MCF 10A (cell line): ENCODE measurements at regions of chr4 and their contacts with region 1.

Region 1: DNA sequence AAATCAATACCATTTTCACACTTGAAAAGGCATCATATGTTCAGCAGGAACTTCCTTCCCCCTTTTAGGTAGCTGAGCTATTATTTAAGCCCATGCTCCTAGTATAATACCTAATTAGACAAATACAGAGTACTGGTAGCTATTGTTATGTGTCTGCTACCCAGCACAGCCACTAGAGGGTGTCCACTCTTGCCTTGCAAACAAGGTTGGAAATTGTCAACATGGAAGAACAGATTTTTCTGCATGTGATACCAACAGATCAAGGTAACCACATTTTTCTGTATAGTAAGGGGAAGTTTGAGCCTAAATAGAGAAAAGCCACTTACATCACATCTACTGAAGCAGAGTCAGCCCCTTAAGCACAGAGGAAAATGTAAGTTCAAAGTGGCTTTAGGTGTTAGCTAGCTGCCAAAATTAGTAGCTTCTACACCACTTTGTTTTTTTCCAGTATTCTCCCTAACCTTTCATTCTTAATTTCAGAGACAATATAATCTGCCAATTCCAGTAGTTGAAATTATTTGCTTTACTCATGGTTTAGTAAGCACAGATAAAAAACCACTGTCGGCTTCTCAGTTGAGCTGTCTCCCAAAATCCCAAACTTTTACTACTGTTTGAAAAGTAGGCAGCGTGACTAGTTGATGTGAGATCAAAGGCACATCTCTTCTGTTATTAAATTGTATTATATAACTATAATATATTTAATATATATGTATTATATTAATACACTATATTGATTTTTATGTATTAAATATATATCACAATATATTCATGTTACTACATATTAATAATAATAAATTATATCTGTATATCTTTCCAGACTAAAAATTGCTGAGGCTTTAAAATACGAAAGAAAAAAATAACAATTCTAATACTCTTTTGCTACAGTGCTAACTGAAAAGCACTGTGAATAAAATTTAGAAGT is 38.2 kb downstream of the EDNRA start:
- DNase-seq: peak; percentile 77
- H3K4me3 Mint-ChIP-seq: no peak overlapping the region
- H3K27ac Mint-ChIP-seq: no peak overlapping the region
- H3K4me1 Mint-ChIP-seq: peaks cover 21% of the 10 kb centered on the region
- H3K27me3 Mint-ChIP-seq: no peaks in the 10 kb centered on the region
- CTCF ChIP-seq: peak; percentile 77

Region 2: DNA sequence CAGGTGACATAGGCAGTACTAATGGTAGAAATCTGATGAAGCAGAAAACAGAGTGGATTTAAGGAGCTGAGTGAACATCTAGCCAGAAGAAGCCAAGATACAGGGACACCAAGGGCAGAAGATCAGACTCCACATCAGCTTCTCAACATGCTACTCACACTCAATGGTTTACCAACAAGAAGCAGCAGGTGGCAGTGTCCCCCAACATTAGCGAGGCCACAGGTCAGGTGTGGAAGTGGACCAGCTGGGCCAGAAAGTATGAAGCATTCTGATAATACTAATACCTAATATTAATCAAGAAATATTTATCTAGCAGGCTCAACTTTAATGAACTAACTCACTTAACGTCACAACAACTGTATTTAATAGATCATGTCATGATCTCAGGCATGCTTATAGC is 500.0 kb before region 1 on chr4:
- CTCF ChIA-PET with region 1: interaction called, 5 read pairs
- POLR2A ChIA-PET with region 1: no interaction called
- intact Hi-C with region 1: loop called (anchors 2 kb)
- DNase-seq: peak; percentile 84
- H3K4me3 Mint-ChIP-seq: no peak overlapping the region
- H3K27ac Mint-ChIP-seq: no peak overlapping the region
- H3K4me1 Mint-ChIP-seq: peaks cover 26% of the 10 kb centered on the region
- H3K27me3 Mint-ChIP-seq: no peaks in the 10 kb centered on the region
- CTCF ChIP-seq: peak; percentile 89

Region 3: GRCh38 chr4:147139455-147140198 is 379.5 kb before region 1 on chr4:
- CTCF ChIA-PET with region 1: no interaction called
- POLR2A ChIA-PET with region 1: no interaction called
- intact Hi-C with region 1: no loop called
- DNase-seq: no peak
- H3K4me3 Mint-ChIP-seq: no peak overlapping the region
- H3K27ac Mint-ChIP-seq: no peak overlapping the region
- H3K4me1 Mint-ChIP-seq: peaks cover 4% of the 10 kb centered on the region
- H3K27me3 Mint-ChIP-seq: no peaks in the 10 kb centered on the region
- CTCF ChIP-seq: no peak

Region 4: GRCh38 chr4:147160908-147161513 is 358.1 kb before region 1 on chr4:
- CTCF ChIA-PET with region 1: interaction called, 7 read pairs
- POLR2A ChIA-PET with region 1: no interaction called
- intact Hi-C with region 1: loop called (anchors 1 kb)
- DNase-seq: peak; percentile 63
- H3K4me3 Mint-ChIP-seq: no peak overlapping the region
- H3K27ac Mint-ChIP-seq: no peak overlapping the region
- H3K4me1 Mint-ChIP-seq: no peaks in the 10 kb centered on the region
- H3K27me3 Mint-ChIP-seq: no peaks in the 10 kb centered on the region
- CTCF ChIP-seq: peak; percentile 78

Region 5: GRCh38 chr4:147340111-147340510 is 179.0 kb before region 1 on chr4:
- CTCF ChIA-PET with region 1: no interaction called
- POLR2A ChIA-PET with region 1: no interaction called
- intact Hi-C with region 1: no loop called
- DNase-seq: peak; percentile 49
- H3K4me3 Mint-ChIP-seq: no peak overlapping the region
- H3K27ac Mint-ChIP-seq: no peak overlapping the region
- H3K4me1 Mint-ChIP-seq: peaks cover 15% of the 10 kb centered on the region
- H3K27me3 Mint-ChIP-seq: no peaks in the 10 kb centered on the region
- CTCF ChIP-seq: no peak

Region 6: GRCh38 chr4:147547314-147548056 is 28.4 kb after region 1 on chr4:
- CTCF ChIA-PET with region 1: interaction called, 11 read pairs
- POLR2A ChIA-PET with region 1: no interaction called
- intact Hi-C with region 1: no loop called
- DNase-seq: peak; percentile 90
- H3K4me3 Mint-ChIP-seq: no peak overlapping the region
- H3K27ac Mint-ChIP-seq: peak overlapping the region; percentile 10
- H3K4me1 Mint-ChIP-seq: peaks cover 48% of the 10 kb centered on the region
- H3K27me3 Mint-ChIP-seq: no peaks in the 10 kb centered on the region
- CTCF ChIP-seq: no peak

Region 7: GRCh38 chr4:147578051-147578476 is 59.0 kb after region 1 on chr4:
- CTCF ChIA-PET with region 1: interaction called, 15 read pairs
- POLR2A ChIA-PET with region 1: interaction called, 7 read pairs
- intact Hi-C with region 1: no loop called
- DNase-seq: peak; percentile 99
- H3K4me3 Mint-ChIP-seq: peak overlapping the region; percentile 17
- H3K27ac Mint-ChIP-seq: peak overlapping the region; percentile 76
- H3K4me1 Mint-ChIP-seq: peaks cover 42% of the 10 kb centered on the region
- H3K27me3 Mint-ChIP-seq: no peaks in the 10 kb centered on the region
- CTCF ChIP-seq: no peak